HEK293T (cell line): ENCODE measurements at regions of chr2 and their contacts with region 1.

Region 1: DNA sequence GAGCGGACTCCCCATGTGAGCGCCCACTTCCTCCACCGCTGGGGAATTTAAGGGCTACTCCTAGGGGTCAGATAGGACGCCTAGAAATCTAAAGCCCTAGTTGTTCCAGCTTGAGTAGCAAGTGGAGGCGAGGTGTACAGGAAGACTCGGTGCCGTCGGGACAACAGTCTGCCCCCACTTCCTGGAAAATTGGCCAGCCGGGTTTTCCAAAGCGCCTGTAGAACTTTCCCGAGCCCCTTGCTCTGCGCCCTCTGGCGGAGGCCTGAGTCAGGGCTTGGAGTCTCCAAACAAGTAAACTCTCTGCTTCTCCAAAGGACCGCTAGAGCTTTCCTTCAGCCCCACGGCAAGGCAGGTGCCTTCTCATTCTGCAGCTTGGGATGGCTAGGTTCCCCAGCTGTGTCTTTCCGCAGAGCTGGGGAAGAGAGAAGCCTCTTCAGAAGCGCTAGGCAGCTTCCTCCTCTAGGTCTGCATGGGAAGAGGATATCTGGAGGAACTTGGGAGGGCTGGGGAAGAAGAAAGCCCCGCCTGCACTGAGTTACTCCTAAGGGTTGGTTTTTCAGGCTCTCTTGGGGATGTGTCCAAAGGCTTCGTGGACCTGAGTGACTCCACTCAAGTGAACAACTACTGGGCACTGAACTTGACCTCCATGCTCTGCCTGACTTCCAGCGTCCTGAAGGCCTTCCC is 688 bp downstream of the SPR start:
- DNase-seq: peak; percentile 83

Region 2: GRCh38 chr2:72862239-72862988 is 25.5 kb before region 1 on chr2:
- CTCF ChIA-PET with region 1: interaction called, 11 read pairs
- POLR2A ChIA-PET with region 1: interaction called, 6 read pairs
- DNase-seq: peak; percentile 95

Region 3: DNA sequence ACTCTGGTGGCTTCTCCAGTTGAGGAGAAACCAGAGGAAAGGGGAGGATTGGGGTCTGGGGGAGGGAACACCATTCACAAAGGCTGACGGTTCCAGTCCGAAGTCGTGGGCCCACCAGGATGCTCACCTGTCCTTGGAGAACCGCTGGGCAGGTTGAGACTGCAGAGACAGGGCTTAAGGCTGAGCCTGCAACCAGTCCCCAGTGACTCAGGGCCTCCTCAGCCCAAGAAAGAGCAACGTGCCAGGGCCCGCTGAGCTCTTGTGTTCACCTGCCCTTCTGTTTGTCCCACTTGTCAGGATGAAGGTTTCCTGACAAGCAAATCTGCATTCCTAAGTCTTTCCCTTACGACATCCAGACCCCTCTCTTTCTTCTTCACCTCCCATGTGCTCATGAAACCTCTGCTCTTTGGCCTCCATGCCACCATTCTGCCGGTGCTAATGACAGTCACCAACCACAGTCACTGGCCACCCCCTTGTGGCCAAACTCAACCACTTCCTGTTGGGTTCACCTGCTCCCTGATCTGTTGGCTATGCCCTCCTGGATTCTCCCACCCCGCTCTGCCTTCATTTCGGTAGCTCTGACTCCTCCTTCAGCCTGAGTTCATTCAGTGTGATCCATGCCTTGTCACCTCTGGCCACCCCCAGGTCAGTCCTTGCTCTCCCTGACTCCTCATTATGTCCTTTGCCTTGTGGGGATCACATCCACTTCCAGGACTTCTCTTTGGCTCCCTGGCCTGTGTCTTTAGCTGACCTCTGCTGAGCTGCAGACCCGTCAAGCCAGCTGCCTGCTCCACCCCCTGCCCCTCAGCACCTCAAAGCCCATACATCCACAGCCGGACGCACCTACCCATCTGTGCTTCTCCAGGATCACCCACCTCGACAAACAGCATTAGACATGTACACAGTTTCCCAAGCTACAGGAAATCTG is 47.1 kb after region 1 on chr2:
- CTCF ChIA-PET with region 1: interaction called, 19 read pairs
- POLR2A ChIA-PET with region 1: interaction called, 3 read pairs
- DNase-seq: peak; percentile 53

Region 4: DNA sequence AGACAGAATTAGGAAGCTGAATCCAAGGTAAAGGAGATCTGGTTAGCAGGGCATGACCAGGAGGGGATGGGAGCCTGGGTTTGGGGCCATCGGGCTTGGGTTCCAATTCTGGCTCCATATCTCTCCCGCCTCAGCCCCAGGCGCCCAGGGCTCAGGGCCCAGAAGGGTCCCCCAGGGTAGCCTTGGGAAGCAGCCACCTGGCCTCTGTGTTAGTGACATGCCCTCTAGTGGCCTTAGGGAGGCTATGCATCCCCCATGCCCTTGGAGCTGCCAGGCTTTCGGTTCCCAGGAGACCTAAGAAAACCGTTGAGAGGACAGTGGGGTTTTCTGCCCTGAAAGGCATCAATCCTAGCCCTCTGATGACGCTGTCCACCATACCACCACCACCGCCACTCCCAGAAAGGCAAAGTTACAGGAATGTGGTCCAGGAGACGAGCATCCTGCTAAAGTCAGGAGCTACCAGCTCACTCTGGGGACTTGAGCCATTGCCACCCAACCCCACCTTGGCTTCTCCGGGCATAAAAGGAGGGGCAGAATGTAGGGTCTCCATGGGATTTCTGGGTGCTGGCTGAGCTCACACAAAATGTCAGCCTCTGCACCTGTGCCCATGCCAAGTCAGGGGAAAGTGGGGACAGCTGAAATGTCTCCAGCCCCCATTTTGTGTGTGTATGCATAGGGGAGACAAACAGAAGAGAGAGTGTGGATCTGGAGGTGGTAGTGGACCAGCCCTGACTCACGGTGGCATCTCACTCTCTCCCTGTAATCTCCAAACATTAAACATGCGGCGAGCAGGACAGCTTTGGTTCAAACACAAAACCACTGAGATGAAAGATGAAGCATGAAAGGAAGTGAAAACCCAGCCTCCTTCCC is 85.9 kb after region 1 on chr2:
- CTCF ChIA-PET with region 1: interaction called, 16 read pairs
- POLR2A ChIA-PET with region 1: no interaction called
- DNase-seq: peak; percentile 86

Region 5: GRCh38 chr2:73163483-73164367 is 275.8 kb after region 1 on chr2:
- CTCF ChIA-PET with region 1: interaction called, 10 read pairs
- POLR2A ChIA-PET with region 1: no interaction called
- DNase-seq: peak; percentile 87